ENCODE measurements at regions of chr21 and their contacts with region 1.

Region 1: DNA sequence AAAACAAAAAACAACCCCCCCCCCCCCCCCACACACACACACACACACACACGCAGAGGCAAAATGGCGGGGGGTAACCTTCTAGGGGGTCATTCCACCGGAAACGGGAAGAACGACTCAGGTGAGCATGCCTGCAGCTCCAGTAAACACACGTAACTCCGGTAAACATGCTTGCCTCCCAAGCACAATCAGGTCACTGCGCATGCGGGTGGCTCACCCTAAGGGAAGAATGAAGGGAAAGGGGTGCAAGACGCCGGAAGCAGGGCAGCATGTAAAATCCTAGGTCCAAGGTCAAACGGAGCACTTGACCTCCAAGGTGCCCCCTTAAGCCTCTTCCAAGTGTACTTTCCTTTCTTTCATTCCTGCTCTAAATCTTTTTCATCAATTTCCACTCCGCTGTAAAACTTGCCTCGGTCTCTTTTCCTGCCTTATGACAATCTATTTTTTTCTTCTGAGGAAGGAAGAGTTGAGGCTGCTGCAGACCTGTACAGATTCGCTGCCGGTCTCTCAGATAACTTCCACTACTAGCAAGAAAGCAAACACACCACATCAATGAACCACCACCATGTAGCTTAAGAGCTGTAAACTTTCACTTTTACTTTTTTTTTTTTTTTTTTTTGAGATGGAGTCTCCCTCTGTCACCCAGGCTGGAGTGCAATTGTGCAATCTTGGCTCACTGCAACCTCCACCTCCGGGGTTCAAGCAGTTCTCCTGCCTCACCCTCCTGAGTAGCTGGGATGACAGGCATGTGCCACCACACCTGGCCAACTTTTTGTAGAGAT is 21.0 kb upstream of the CBR3 start:
- DNase-seq: no peak
- H3K4me3 ChIP-seq: no peak overlapping the region
- H3K27ac ChIP-seq: no peak overlapping the region
- H3K4me1 ChIP-seq: peaks cover 0 to 11% (median 0%) of the 10 kb centered on the region in 4 donors
- H3K27me3 ChIP-seq: no peaks in the 10 kb centered on the region
- CTCF ChIP-seq: no peak

Region 2: GRCh38 chr21:35616090-35616489 is 497.7 kb before region 1 on chr21:
- intact Hi-C with region 1: no loop called
- DNase-seq: no peak
- H3K4me3 ChIP-seq: no peak overlapping the region
- H3K27ac ChIP-seq: no peak overlapping the region
- H3K4me1 ChIP-seq: no peaks in the 10 kb centered on the region
- H3K27me3 ChIP-seq: no peaks in the 10 kb centered on the region
- CTCF ChIP-seq: peak; percentile 44 to 61

Region 3: DNA sequence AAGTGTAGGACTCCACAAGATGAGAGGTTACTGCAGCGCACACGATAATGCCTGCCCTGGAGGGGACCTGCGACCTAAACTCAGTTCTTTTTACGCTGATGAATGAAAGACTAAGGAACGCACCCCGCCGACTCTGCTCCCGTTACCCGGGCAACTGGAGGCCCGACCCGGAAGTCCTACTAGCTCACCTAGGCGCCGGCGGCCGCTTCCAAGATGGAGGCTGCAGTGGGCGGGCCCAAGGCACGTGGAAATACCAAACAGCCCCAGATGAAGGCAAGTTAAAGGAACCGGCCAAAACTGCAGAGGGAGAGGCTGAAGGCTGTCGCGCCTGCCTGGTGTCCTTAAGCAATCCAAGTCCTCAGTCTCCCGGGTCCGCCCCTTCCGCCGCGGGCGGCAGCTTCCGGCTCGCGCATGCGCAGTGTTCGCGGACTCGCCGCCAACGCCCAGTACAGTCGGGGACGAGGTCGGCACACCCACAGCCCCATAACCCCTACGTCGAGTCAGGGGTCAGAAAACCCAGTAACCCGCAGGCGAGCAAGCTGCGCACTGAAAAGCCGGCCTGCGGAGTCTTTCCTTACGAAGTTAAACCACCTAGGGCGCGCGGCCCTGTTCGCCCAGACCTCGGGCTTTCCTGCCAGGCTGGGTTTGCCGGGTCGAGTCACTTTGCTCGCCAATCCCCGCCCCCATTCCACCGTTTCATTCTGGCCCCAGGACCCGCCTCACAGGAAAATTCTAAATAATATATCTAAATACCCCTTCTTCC is 53.5 kb before region 1 on chr21 and contains the start of gene SETD4:
- intact Hi-C with region 1: loop called (anchors 10 kb)
- DNase-seq: peak; percentile 89 to 95
- H3K4me3 ChIP-seq: peak within 1 kb of the TSS; percentile 74 to 83
- H3K27ac ChIP-seq: peak within 1 kb of the TSS; percentile 94
- H3K4me1 ChIP-seq: peaks cover 0 to 16% (median 10%) of the 10 kb centered on the region in 4 donors
- H3K27me3 ChIP-seq: no peaks in the 10 kb centered on the region
- CTCF ChIP-seq: no peak

Region 4: DNA sequence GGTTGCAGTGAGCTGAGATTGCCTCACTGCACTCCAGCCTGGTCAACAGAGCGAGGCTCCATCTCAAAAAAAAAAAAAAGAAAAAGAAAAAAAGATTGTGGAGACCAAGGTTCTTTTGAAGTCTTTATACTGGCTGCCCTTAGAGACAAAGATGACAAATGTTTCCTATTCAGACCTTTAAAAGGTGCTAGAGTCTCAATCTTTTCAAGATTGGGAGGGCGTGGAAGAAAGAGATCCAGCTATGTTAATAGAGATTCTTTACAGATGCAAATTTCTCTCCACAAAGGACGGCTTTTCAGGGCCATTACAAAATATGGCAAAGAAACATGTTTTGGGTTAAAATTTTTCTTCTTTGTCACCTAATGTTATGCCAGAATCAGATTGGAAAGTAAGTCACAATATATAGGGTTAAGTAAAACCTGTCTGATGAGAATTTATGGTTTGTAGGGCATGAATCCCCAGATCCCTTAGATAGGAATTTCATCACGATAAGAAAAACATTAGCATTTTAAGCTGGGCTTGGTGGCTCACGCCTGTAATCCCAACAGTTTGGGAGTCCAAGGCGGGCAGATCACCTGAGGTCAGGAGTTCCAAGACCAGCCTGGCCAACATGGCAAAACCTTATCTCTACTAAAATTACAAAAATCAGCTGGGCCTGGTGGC is 193.2 kb after region 1 on chr21:
- intact Hi-C with region 1: no loop called
- DNase-seq: no peak
- H3K4me3 ChIP-seq: no peak overlapping the region
- H3K27ac ChIP-seq: no peak overlapping the region
- H3K4me1 ChIP-seq: no peaks in the 10 kb centered on the region
- H3K27me3 ChIP-seq: no peaks in the 10 kb centered on the region
- CTCF ChIP-seq: no peak